ENCODE measurements at regions of chr3 and their contacts with region 1.

Region 1: DNA sequence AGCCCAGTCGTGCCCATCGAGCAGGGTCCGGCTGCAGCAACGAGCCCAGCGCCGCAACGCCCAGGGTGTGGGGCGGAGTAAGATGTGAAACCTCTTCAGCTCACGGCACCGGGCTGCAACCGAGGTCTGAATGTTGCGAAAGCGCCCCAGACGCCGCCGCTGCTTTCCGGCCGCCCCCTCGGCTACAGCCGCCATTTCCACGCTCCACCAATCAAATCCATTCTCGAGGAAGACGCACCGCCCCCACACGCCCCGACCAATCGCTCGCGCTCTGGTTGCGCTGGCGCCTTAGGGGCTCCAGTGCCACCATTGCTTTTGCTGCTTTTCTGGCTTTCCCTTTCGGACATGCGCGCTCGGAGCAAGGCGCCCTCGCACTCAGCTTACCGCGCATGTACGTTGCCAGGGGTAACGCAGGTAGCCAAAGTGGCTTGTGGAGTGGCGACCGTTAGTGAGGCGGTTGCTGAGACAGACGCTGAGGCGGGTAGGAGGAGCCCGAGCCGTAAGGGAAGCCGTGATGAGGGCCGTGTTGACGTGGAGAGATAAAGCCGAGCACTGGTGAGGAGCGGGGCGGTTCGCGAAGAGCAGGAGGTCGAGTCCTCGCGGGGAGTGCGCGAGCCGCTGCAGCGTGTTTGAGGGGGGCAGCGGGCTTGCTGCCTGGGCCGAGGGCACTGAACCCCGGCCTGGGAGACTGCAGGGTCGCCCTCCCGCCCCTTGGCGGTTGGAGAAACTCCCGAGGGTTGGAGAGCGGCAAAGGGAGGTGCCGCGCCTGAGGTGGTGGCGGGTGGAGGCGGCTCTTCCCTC is at the starts of genes IFT122 and MBD4:
- DNase-seq: peak; percentile 99 to 100 (median 100)
- H3K4me3 ChIP-seq: peak within 1 kb of the TSS; percentile 83 to 98 (median 96)
- H3K27ac ChIP-seq: peak within 1 kb of the TSS; percentile 85 to 92
- H3K4me1 ChIP-seq: peaks cover 33 to 61% (median 48%) of the 10 kb centered on the region in 4 experiments
- H3K27me3 ChIP-seq: no peaks in the 10 kb centered on the region

Region 2: DNA sequence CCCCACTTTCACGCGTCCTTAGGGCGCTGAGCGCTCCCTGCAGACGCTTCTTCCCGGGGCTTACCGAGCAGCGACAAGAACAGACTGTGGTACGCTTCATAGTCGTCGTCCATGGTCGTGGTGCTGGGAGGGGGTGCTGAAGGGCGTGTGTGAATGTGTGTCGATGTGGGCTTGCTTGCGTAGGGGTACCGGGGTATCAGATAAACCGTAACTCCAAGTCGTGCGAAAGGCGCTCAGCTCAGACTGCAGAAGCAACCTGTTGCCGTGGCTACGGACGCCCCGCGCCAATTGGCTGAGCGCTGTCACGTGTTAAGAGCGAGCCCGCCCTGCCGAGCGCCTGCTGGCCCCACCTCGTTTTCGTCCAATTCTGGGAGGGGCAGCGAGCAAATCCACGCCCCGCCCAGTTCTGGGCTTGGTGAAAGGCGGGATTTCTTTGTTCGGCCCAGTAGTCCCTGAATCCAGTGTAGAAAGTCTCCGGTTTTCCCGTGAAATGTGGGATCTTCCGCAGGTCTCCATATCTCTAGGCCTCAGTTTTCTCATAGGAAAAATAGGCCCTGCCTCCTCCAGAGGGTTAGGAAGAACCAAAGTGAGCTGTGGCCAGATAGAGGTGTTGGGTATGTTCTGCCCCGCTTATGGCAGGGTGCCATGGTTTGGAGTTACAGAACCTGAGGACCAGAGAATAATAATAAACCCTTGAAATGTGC is 11.5 kb before region 1 on chr3 and contains the start of gene EFCAB12:
- CTCF ChIA-PET with region 1: interaction called, 7 read pairs
- POLR2A ChIA-PET with region 1: interaction called, 15 read pairs
- DNase-seq: peak; percentile 90 to 94 (median 93)
- H3K4me3 ChIP-seq: peak within 1 kb of the TSS; percentile 15 to 89 (median 72)
- H3K27ac ChIP-seq: no peak within 1 kb of the TSS
- H3K4me1 ChIP-seq: peaks cover 4 to 45% (median 26%) of the 10 kb centered on the region in 4 experiments
- H3K27me3 ChIP-seq: peaks cover 0 to 8% (median 0%) of the 10 kb centered on the region in 5 experiments

Measured in common myeloid progenitor, CD34-positive (primary cell).